ENCODE measurements at regions of chr4 and their contacts with region 1.

Region 1: GRCh38 chr4:68271851-68272756 is 26.6 kb upstream of the TMPRSS11B start:
- DNase-seq: no peak
- ATAC-seq: peak; percentile 80
- H3K4me3 ChIP-seq: no peak overlapping the region
- H3K27ac ChIP-seq: no peak overlapping the region
- H3K4me1 ChIP-seq: no peaks in the 10 kb centered on the region
- H3K27me3 ChIP-seq: no peaks in the 10 kb centered on the region; a peak in 1 of 4 replicates
- CTCF ChIP-seq: peak; percentile 48 to 66 (median 53); a peak in 5 of 6 replicates
- EP300 ChIP-seq: no peak
- POLR2A ChIP-seq: no peak
- RAD21 ChIP-seq: peak; percentile 72

Region 2: GRCh38 chr4:68288393-68288740 is 16.3 kb after region 1 on chr4:
- CTCF ChIA-PET with region 1: interaction called, 10 read pairs
- POLR2A ChIA-PET with region 1: no interaction called
- RAD21 ChIA-PET with region 1: interaction called, 5 read pairs
- SMC1A ChIA-PET with region 1: interaction called, 10 read pairs
- in situ Hi-C with region 1: no loop called
- intact Hi-C with region 1: no loop called
- DNase-seq: no peak
- ATAC-seq: peak; percentile 69
- H3K4me3 ChIP-seq: no peak overlapping the region
- H3K27ac ChIP-seq: no peak overlapping the region
- H3K4me1 ChIP-seq: no peaks in the 10 kb centered on the region
- H3K27me3 ChIP-seq: no peaks in the 10 kb centered on the region
- CTCF ChIP-seq: no peak
- EP300 ChIP-seq: no peak
- POLR2A ChIP-seq: no peak
- RAD21 ChIP-seq: no peak

Region 3: DNA sequence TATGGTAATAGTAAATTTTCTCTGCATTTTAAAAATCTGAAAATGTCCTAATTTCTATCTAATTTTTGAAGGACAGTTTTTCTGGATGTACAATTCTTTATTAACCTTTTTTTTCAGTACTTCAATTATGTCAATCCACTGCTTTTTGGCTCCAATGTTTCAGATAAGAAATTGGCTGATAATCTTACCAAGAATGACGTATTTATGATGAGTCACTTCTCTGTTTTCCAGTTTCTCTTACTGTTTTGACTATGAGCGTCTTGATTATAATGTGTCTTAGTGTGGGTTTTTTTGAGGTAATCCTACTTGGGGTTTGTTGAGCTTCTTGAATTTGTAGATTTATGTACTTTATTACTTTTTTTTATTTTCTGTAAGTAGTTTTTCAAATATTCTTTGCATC is 895.2 kb after region 1 on chr4:
- CTCF ChIA-PET with region 1: no interaction called
- POLR2A ChIA-PET with region 1: no interaction called
- RAD21 ChIA-PET with region 1: interaction called, 4 read pairs
- SMC1A ChIA-PET with region 1: interaction called, 4 read pairs
- in situ Hi-C with region 1: no loop called
- intact Hi-C with region 1: loop called (anchors 2 kb)
- DNase-seq: no peak
- ATAC-seq: no peak
- H3K4me3 ChIP-seq: no peak overlapping the region
- H3K27ac ChIP-seq: no peak overlapping the region
- H3K4me1 ChIP-seq: no peaks in the 10 kb centered on the region
- H3K27me3 ChIP-seq: no peaks in the 10 kb centered on the region
- CTCF ChIP-seq: no peak
- EP300 ChIP-seq: no peak
- POLR2A ChIP-seq: no peak
- RAD21 ChIP-seq: no peak

Region 4: DNA sequence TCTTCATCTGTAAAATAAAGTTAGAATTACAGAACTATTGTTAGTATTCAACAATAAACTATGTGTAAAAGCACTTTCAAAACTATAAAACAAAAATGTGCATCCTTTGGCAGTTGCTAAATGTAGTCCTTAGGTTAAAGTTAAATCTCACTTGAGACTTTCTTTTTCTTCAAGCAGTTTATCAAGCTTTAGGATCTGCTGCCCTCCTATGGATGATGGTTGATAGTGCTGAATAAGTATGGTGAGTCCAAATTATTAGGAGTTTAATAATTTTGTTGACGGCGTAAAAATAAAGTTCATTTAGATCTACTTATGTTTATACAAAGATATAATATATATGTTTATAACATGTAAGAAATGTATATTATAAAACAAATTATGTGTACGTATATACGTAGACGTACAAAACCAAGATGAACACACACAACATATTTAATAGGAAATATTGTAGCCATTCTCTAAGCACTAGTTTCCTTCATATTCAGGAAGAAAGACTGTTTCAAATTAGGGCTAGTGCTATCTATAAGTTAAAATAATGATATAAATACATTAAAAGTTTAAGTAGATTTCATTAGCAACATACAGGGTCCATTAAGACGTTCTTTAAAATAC is 1345.1 kb after region 1 on chr4:
- CTCF ChIA-PET with region 1: no interaction called
- POLR2A ChIA-PET with region 1: no interaction called
- RAD21 ChIA-PET with region 1: interaction called, 3 read pairs
- SMC1A ChIA-PET with region 1: interaction called, 3 read pairs
- in situ Hi-C with region 1: no loop called
- intact Hi-C with region 1: loop called (anchors 2 kb)
- DNase-seq: no peak
- ATAC-seq: peak; percentile 50; the same call in 2 of the 3 replicates
- H3K4me3 ChIP-seq: no peak overlapping the region
- H3K27ac ChIP-seq: no peak overlapping the region
- H3K4me1 ChIP-seq: no peaks in the 10 kb centered on the region
- H3K27me3 ChIP-seq: no peaks in the 10 kb centered on the region
- CTCF ChIP-seq: peak; percentile 30 to 46 (median 31); a peak in 4 of 6 replicates
- EP300 ChIP-seq: no peak
- POLR2A ChIP-seq: no peak
- RAD21 ChIP-seq: peak; percentile 70